ENCODE measurements at regions of chr11 and their contacts with region 1.

Region 1: DNA sequence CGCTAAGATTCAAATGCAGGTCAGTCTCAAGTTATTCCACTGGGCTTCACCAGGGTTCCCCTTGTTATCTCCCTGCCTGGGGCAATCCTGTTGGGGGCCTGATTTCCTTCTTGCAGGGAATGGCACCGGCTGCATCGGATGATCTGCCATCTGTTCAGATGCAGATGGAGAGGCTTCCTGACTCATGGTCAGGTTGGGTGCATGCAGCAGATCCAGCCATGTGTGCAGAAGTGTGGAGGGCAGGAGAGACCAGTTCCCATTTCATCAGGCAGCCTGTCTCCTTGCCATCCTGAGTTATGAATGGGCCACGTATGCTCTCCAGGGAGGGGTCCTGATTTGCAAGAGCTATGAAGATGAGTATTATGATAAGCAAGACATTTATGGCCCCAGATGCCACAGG is 161.2 kb upstream of the PLET1 start:
- DNase-seq: no peak
- H3K4me3 ChIP-seq: no peak overlapping the region
- H3K27ac ChIP-seq: no peak overlapping the region
- H3K4me1 ChIP-seq: no peaks in the 10 kb centered on the region
- H3K27me3 ChIP-seq: no peaks in the 10 kb centered on the region
- CTCF ChIP-seq: no peak
- POLR2A ChIP-seq: no peak

Region 2: DNA sequence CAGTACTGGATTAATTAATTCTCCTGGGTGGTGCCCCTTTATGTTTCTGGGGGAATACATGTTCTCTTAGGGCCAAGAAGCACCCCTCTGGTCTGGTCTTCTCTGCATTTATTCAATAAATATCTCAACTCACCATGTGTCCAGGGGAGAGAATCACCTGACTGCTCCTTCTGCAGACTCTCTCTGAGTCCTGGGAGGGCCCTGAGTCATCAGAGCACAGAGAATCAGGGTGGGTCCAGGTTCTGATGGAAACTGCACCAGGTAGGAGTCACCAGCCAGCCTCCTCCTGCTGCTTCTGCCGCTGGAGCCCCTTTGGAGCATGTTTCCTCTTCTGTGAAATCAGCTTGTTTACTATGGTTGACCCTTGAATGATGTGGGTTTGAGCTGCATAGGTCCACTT is 53.5 kb before region 1 on chr11:
- intact Hi-C with region 1: loop called (anchors 2 kb)
- DNase-seq: no peak
- H3K4me3 ChIP-seq: no peak overlapping the region
- H3K27ac ChIP-seq: no peak overlapping the region
- H3K4me1 ChIP-seq: no peaks in the 10 kb centered on the region
- H3K27me3 ChIP-seq: no peaks in the 10 kb centered on the region
- CTCF ChIP-seq: no peak
- POLR2A ChIP-seq: no peak